ENCODE measurements at regions of chr12 and their contacts with region 1.

Region 1: GRCh38 chr12:7219599-7220243 is 30.2 kb downstream of the PEX5 start:
- DNase-seq: peak; percentile 71
- H3K4me3 ChIP-seq: no peak overlapping the region
- H3K27ac ChIP-seq: no peak overlapping the region
- H3K4me1 ChIP-seq: no peaks in the 10 kb centered on the region
- H3K27me3 ChIP-seq: peaks cover 0 to 1% of the 10 kb centered on the region in 2 experiments
- CTCF ChIP-seq: peak; percentile 74 to 75
- POLR2A ChIP-seq: no peak

Region 2: DNA sequence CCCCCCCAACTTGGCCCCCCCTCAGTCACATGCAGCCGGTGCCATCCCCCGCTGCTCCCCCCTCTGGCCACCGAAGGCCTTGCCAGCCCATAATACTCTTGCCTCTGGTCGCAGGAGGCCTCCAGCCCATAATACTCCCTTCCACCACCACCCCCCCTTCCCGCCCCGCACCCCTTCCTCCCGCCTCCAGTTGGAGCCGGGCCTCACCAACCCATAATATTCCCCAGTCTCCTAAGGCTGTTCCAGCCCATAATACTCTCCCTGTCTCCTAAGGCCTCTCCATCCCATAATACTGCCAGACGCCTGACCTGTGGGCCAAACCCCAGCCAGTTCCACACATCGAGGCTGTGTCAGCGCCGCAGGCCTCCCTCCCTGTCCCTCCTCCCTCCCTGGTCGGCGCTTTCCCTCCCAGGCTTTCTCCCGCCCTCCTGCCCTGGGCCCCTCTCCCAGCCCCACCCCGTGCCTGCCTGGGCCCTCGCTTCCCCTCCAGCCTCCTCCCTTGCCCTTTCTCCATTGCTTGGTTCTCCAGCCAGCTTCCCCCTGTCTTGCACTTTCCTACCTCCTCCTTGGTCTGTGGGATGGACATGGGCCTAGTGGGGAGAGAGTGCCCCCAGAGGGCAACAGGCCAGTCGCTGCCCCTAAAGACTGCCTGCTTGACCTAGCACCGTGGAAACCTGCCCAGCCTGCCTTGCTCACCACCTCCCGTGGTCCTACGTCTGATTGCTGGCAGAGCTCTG is 605.8 kb before region 1 on chr12:
- CTCF ChIA-PET with region 1: no interaction called
- POLR2A ChIA-PET with region 1: no interaction called
- dilution Hi-C with region 1: no loop called
- intact Hi-C with region 1: no loop called
- DNase-seq: peak; percentile 87
- H3K4me3 ChIP-seq: no peak overlapping the region
- H3K27ac ChIP-seq: no peak overlapping the region
- H3K4me1 ChIP-seq: peaks cover 11% of the 10 kb centered on the region
- H3K27me3 ChIP-seq: no peaks in the 10 kb centered on the region
- CTCF ChIP-seq: no peak
- POLR2A ChIP-seq: peak; percentile 39

Region 3: DNA sequence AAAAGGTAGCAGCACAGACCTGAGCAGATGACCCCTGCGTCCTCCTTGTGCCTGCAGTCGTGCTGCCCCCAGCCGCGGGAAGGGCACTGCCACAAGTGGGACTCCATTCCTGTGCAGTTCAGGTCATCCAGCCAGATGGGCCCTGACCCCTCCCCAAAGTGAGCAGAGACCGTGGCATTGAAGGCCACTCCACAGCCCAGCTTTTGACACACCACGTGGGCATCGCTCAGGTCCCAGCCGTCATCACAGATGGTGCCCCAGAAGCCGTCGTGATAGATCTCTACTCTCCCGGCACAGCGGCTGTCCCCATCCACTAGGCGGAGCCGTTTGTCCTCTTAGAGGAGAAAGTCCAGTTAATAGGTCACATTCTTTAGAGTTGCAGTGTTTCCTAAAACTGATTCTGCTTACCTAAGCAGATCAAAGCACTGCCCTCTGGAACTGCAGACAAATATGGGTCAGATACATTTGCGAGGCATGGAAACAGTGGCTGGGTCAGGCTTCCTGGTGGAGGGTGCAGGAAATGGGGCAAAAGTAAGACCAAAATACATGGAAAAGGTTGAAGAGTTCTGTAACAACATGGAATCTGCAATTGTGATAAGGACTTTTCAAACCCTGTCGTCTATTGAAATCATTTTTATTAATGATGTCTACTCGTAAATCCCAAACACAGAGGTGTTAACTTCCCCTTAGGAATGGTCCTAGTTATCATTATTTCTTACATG is 154.9 kb after region 1 on chr12:
- CTCF ChIA-PET with region 1: no interaction called
- POLR2A ChIA-PET with region 1: no interaction called
- dilution Hi-C with region 1: no loop called
- intact Hi-C with region 1: loop called (anchors 1 kb)
- DNase-seq: peak; percentile 51
- H3K4me3 ChIP-seq: no peak overlapping the region
- H3K27ac ChIP-seq: no peak overlapping the region
- H3K4me1 ChIP-seq: no peaks in the 10 kb centered on the region
- H3K27me3 ChIP-seq: no peaks in the 10 kb centered on the region
- CTCF ChIP-seq: peak; percentile 71 to 73
- POLR2A ChIP-seq: no peak

Region 4: GRCh38 chr12:7439579-7440505 is 220.1 kb after region 1 on chr12:
- CTCF ChIA-PET with region 1: no interaction called
- POLR2A ChIA-PET with region 1: no interaction called
- dilution Hi-C with region 1: no loop called
- intact Hi-C with region 1: loop called (anchors 5 kb)
- DNase-seq: peak; percentile 65
- H3K4me3 ChIP-seq: peak overlapping the region; percentile 23 to 45 (median 40)
- H3K27ac ChIP-seq: peak overlapping the region; percentile 59
- H3K4me1 ChIP-seq: peaks cover 19% of the 10 kb centered on the region
- H3K27me3 ChIP-seq: no peaks in the 10 kb centered on the region
- CTCF ChIP-seq: peak in 1 of 2 donors; percentile 9
- POLR2A ChIP-seq: no peak

Region 5: GRCh38 chr12:7498832-7499231 is 279.1 kb after region 1 on chr12:
- CTCF ChIA-PET with region 1: no interaction called
- POLR2A ChIA-PET with region 1: no interaction called
- dilution Hi-C with region 1: no loop called
- intact Hi-C with region 1: no loop called
- DNase-seq: no peak
- H3K4me3 ChIP-seq: no peak overlapping the region
- H3K27ac ChIP-seq: no peak overlapping the region
- H3K4me1 ChIP-seq: no peaks in the 10 kb centered on the region
- H3K27me3 ChIP-seq: peaks cover 9% of the 10 kb centered on the region in 2 experiments
- CTCF ChIP-seq: no peak
- POLR2A ChIP-seq: no peak